ENCODE measurements at regions of chr6 and their contacts with region 1.

Region 1: DNA sequence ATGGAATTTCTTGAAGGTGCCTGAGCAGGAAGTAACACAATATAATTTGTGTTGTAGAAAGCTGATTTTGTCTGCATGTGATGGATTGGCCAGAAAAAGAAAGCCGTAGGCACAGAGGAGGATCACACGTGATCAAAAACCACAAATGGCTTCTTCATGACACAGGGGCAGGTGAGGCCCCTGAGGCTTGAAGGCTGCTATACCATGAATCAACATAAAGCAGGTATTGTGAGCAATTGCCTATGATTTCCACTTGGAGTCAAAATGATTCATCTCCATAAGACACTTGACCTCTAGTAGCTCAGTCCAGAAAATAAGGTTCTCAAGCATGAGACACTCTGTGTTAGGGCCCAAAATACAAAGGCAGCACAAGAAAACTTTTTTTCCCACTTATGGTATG is 42.4 kb upstream of the EYA4 start:
- DNase-seq: no peak
- H3K4me3 ChIP-seq: no peak overlapping the region
- H3K27ac ChIP-seq: no peak overlapping the region
- H3K27me3 ChIP-seq: no peaks in the 10 kb centered on the region
- CTCF ChIP-seq: no peak

Region 2: DNA sequence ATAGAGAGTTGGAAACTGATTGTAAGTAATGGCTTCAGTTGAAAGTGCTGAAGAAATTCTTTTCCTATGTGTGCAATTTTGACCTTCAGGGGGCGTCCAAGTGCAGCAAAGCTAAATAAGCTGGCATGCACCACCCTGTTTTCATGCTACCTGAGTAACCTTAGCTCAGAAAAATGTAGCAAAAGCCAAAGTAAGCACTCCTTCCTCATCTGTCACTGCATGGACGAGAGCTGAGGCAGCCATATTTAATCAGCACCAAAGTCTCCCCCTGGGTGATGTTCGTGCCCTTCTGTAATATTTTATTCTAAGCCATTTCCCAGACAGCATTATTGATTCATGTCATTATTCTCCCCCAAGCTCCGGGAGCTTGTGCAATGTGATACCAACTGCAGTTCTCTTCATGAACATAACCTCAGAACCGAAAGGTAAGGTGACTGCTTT is 261.2 kb before region 1 on chr6:
- CTCF ChIA-PET with region 1: interaction called, 13 read pairs
- POLR2A ChIA-PET with region 1: no interaction called
- DNase-seq: no peak
- H3K4me3 ChIP-seq: no peak overlapping the region
- H3K27ac ChIP-seq: no peak overlapping the region
- H3K27me3 ChIP-seq: no peaks in the 10 kb centered on the region
- CTCF ChIP-seq: peak; percentile 76